Ascending aorta (tissue), 2 donors: ENCODE measurements at regions of chr6 and their contacts with region 1.

Region 1: DNA sequence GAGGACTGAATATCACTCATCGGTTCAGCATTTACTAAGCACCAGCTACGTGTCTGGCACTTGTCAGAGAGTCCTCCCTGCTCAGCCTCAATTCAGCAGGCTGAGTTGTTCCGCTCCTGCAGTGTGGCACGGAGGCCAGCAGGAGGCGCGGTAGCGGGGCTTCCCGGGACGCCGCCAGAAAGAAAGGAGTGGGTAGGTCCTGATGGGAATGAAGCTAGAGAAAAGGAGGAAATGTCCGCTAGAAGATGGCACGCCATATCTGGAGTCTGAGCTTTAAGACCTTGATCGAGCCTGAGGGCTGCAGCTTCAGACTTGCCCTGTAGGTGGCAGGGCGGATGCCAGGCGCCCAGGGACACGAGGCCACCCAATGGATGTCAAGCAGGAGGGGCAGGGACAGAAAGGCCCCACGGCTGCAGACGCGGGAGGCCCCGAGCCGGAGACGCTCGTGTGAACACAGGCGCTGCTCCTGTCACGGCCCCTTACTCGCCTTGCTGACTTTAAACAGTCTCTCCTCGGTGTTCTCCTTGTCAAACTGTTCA is 18.7 kb downstream of the SERPINB6 start:
- DNase-seq: peak; percentile 37 to 89
- H3K4me3 ChIP-seq: peak overlapping the region in 1 of 2 donors; percentile 48
- H3K27ac ChIP-seq: peak overlapping the region; percentile 65 to 77
- H3K4me1 ChIP-seq: no peaks in the 10 kb centered on the region
- H3K27me3 ChIP-seq: no peaks in the 10 kb centered on the region
- CTCF ChIP-seq: peak; percentile 97 to 99 (median 98)

Region 2: DNA sequence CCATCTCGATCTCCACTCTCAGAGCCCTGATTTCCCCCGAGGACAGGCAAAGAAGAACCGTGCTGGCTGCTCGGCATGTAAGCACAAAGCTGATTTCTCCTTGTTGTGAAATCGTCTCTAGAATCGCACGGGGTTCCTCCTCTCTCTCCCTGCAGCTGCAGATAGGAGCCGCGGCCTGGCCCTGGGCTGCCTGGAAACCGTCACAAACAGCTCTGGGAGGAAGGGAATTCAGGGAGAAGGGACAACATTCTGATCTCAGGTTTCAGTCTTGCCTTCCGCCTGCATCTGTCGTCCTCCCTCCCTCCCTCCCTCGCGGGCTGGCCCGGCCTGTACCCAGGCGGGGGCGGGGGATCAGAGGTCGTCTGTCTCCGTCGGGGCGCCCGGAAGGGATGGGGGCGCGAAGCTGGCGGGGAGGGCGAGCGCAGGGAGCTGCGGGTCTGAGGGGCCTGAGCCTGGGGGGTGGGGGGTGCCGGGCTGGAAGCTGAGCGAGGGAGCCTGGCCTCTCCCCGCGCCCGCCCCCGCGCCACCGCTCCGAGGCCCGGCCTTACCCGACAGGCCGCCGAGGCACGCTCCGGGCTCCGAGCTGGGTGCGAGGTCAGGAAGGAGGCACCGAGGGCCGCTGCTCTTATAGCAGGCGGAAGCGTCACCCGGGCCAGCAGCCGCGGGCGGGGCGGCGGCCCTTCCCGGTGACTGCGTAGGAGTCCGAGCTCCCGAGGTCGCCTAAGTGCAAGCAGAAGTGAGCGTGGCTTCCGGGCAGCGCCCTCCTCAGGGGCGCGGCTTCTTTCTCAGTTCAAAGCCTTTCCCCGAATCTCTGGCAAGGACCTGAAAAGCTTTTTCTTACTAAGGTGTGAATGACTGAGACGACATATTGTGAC is 111.1 kb before region 1 on chr6 and contains the start of gene SERPINB1:
- intact Hi-C with region 1: loop called (anchors 5 kb)
- DNase-seq: peak; percentile 75 to 97
- H3K4me3 ChIP-seq: peak within 1 kb of the TSS; percentile 74 to 87
- H3K27ac ChIP-seq: peak within 1 kb of the TSS; percentile 97 to 99
- H3K4me1 ChIP-seq: peaks cover 10 to 16% of the 10 kb centered on the region in 2 donors
- H3K27me3 ChIP-seq: no peaks in the 10 kb centered on the region
- CTCF ChIP-seq: peak in 1 of 3 experiments; percentile 20
- total RNA-seq, gene SERPINB1: 14.0 TPM

Region 3: GRCh38 chr6:2971420-2972218 is 19.0 kb after region 1 on chr6 and contains the start of gene SERPINB6:
- intact Hi-C with region 1: loop called (anchors 1 kb)
- DNase-seq: peak in 1 of 2 donors; percentile 90
- H3K4me3 ChIP-seq: peak within 1 kb of the TSS; percentile 84 to 86
- H3K27ac ChIP-seq: peak within 1 kb of the TSS; percentile 99
- H3K4me1 ChIP-seq: peaks cover 0 to 11% of the 10 kb centered on the region in 2 donors
- H3K27me3 ChIP-seq: no peaks in the 10 kb centered on the region
- CTCF ChIP-seq: no peak
- total RNA-seq, gene SERPINB6: 222 TPM

Region 4: GRCh38 chr6:3052481-3053230 is 100.0 kb after region 1 on chr6:
- intact Hi-C with region 1: loop called (anchors 2 kb)
- DNase-seq: no peak
- H3K4me3 ChIP-seq: no peak overlapping the region
- H3K27ac ChIP-seq: no peak overlapping the region
- H3K4me1 ChIP-seq: peaks cover 0 to 10% of the 10 kb centered on the region in 2 donors
- H3K27me3 ChIP-seq: no peaks in the 10 kb centered on the region
- CTCF ChIP-seq: no peak

Region 5: DNA sequence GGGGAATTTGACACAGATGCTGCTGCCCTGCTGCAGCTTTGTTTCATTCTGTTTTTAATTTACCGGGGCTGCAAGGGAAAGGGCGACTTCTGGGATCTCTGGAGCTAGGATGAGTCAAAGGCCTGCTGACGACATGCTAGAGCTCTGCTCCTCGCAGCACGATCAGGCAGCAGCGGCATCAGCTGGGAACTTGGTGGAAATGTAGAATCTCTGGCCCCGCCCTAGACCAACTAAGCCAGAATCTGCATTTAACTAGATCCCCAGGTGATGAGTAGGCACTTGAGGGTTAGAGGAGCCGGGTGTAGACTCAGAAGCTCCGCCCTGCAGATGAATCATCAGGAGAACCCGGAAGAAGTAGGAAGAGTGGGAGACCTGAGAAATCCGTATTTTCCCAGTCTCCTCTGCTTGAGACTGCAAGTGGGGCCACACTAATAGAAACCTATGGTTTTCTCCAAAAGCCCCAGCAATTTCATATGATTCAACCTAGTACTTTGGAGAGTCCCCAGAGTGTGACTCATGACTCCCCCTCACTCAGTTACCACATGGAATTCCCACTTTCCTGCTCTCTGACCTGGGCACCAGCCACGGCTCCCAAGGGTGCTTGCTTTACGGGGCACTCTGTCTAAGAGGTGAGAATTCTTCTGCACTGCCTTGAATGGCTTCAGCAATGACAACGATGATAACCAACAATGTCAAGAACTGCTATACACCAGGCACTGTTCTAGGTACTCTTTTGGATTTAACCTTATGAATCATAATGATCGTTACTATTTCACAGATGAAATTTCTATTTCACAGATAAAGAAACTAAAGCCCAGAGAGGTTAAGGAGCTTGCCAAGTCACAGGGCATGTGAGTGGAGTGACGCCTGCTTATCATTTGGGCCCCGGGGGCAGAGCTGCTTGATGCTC is 256.7 kb after region 1 on chr6:
- intact Hi-C with region 1: no loop called
- DNase-seq: peak in 1 of 2 donors; percentile 70
- H3K4me3 ChIP-seq: no peak overlapping the region
- H3K27ac ChIP-seq: peak overlapping the region; percentile 15 to 64
- H3K4me1 ChIP-seq: peaks cover 3 to 27% of the 10 kb centered on the region in 2 donors
- H3K27me3 ChIP-seq: no peaks in the 10 kb centered on the region
- CTCF ChIP-seq: no peak

Region 6: DNA sequence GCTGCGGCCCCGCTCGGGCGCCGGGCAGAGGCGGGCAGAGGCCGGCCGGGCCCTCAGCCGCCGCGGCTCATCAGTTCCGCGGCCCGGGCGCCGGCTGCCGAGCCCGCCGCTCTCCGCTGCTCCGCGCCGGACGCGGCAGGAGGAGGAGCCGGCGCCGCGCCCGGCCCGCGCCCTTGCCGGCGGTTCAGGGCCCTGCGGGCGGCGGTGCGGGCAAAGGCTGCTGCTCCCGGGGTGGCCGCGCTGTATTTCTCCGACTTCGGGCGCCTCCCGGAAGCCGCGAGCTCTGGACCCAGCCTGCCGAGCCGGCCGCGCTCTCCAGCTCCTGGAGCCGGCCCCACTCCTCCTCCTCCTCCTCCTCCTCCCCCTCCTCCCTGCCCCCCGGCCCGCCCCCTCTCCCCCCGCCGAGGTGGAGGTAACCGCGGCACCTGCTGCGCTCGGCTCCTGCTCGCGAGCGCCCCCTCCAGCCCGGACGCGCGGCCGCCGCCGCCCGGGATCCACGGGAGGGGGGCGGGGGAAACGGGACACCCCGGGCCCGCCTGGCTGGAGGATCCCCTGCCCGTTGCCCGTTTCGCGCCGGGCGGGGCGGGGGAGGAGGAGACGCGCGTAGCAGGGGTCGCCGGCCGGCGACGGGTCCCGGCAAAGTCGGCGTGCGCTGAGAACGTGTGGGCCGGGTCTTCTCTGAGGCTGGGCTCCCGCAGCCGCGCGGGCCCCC is 504.3 kb after region 1 on chr6 and contains the start of gene SLC22A23:
- intact Hi-C with region 1: no loop called
- DNase-seq: peak in 1 of 2 donors; percentile 72
- H3K4me3 ChIP-seq: peak within 1 kb of the TSS; percentile 74 to 79
- H3K27ac ChIP-seq: peak within 1 kb of the TSS in 1 of 2 donors; percentile 37
- H3K4me1 ChIP-seq: peaks cover 5 to 8% of the 10 kb centered on the region in 2 donors
- H3K27me3 ChIP-seq: no peaks in the 10 kb centered on the region
- CTCF ChIP-seq: peak; percentile 36 to 92 (median 59)
- total RNA-seq, gene SLC22A23: 42.0 TPM